ENCODE measurements at regions of chr11 and their contacts with region 1.

Region 1: DNA sequence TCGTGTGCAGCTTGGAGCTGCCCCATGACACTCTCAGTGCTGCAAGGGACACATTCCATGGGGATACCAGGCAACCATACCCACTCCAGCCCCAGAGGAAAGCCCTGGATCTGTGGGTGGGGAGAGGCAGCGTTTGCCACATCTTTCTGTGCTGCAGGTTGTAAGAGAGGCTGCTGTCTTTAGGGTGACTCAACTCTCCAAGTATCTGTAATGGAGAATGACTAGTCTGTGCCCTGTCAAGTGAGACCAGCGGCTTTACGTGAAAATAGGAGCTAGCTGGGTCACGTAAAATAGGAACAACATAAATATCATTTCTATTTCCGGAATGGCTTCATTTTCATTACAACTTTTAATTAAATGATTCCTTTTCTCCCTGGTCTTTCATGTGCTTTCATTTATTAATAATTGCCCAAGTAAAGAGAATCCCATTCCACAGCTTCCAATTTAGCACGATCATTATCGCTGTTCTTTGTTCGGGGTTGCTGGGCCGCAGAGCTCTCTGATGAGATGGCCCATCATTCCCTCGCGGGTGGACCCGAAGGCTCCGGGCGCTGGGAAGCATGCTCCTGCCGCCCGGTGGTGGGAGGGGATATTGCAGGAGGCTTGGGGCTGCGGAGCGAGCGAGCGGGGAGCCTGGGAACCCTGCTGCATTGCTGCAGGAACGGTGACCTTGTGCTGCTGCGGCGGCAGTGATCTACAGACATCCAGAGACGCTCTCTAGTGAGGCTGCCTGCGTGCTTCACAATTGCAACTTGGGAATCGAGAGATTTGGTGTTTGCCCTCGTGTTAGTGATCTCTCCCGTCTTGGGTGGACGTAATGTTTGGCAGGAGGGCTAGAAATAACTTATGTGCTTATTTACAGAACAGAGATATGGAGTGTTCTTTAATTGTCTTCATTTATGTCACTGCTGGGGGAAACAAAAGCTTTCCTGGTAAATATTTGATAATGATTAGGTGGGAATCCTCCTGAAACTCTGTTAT is 10.6 kb downstream of the SLC6A5 start:
- DNase-seq: peak; percentile 68 to 98
- H3K4me3 ChIP-seq: no peak overlapping the region
- H3K27ac ChIP-seq: no peak overlapping the region
- H3K4me1 ChIP-seq: no peaks in the 10 kb centered on the region; a peak in 2 of 7 replicates
- H3K27me3 ChIP-seq: peaks cover 0 to 4% (median 2%) of the 10 kb centered on the region in 4 experiments; a peak in 3 of 7 replicates
- CTCF ChIP-seq: peak; percentile 89 to 97 (median 95)
- EP300 ChIP-seq: no peak
- POLR2A ChIP-seq: no peak
- RAD21 ChIP-seq: peak; percentile 98 to 100

Region 2: DNA sequence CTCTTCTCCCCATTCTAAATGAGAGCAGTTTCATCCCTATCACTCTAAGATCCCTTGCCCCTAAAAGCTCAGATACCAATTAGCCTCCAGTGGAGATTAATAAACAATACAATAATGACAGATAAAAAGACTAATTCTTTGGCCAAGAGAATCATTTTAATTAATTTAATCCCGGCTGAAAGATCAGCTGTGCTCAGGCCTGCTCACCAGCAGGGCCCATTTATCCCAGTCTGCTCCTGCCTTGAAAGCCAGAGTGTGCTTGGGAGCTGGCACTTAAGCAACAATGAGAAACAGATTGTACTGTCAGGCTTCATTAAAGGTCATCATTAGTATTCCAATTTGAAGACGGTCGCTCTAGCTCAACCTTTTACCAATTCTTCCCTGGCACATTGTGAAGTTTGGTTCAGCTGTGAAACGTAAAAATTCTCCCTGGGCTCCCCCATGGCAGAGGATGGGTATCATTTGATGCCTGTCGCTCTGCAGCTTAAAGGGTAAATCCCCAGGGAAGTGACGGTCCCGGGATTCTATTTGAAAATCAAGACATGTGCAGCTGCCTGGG is 282.6 kb before region 1 on chr11:
- CTCF ChIA-PET with region 1: no interaction called
- POLR2A ChIA-PET with region 1: no interaction called
- DNase-seq: no peak
- H3K4me3 ChIP-seq: no peak overlapping the region
- H3K27ac ChIP-seq: no peak overlapping the region
- H3K4me1 ChIP-seq: no peaks in the 10 kb centered on the region
- H3K27me3 ChIP-seq: no peaks in the 10 kb centered on the region
- CTCF ChIP-seq: no peak
- EP300 ChIP-seq: no peak
- POLR2A ChIP-seq: no peak
- RAD21 ChIP-seq: no peak

Region 3: GRCh38 chr11:20387241-20388095 is 222.5 kb before region 1 on chr11 and contains the start of gene PRMT3:
- CTCF ChIA-PET with region 1: interaction called, 10 read pairs
- POLR2A ChIA-PET with region 1: interaction called, 3 read pairs
- DNase-seq: peak; percentile 89 to 98
- H3K4me3 ChIP-seq: peak within 1 kb of the TSS; percentile 63 to 98 (median 88)
- H3K27ac ChIP-seq: peak within 1 kb of the TSS; percentile 96
- H3K4me1 ChIP-seq: peaks cover 0 to 4% (median 3%) of the 10 kb centered on the region in 4 experiments; a peak in 3 of 7 replicates
- H3K27me3 ChIP-seq: no peaks in the 10 kb centered on the region
- CTCF ChIP-seq: peak in 2 of 3 experiments; percentile 75 to 95; a peak in 3 of 4 replicates
- EP300 ChIP-seq: no peak
- POLR2A ChIP-seq: peak; percentile 89 to 90
- RAD21 ChIP-seq: peak; percentile 44 to 48; a peak in 3 of 4 replicates
- total RNA-seq, gene PRMT3: 25.0 and 26.5 TPM in 2 replicates

Region 4: DNA sequence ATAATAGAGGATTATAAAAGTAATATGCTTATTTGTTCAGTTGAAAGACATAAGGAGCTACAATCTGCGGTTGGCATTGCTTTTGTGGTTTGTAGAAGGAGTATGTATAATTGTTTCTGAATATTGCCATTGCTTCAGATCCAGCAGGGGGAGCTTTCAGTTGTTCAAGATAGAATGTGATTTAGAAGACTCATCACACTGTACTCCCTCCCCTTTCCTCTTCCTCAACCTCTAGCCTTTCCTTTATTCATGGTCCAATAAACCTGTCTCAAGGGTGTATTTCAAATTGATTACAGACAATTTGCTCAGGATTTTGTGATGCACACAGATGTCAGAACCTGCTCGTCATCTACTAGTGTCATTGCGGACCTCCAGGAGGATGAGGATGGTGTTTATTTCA is 212.7 kb before region 1 on chr11:
- CTCF ChIA-PET with region 1: interaction called, 53 read pairs
- POLR2A ChIA-PET with region 1: no interaction called
- DNase-seq: no peak
- H3K4me3 ChIP-seq: no peak overlapping the region
- H3K27ac ChIP-seq: no peak overlapping the region
- H3K4me1 ChIP-seq: no peaks in the 10 kb centered on the region
- H3K27me3 ChIP-seq: no peaks in the 10 kb centered on the region
- CTCF ChIP-seq: peak in 2 of 3 experiments; percentile 46 to 56; a peak in 3 of 4 replicates
- EP300 ChIP-seq: no peak
- POLR2A ChIP-seq: no peak
- RAD21 ChIP-seq: peak; percentile 38 to 52

Region 5: GRCh38 chr11:20599221-20600019 is 10.6 kb before region 1 on chr11 and contains the start of gene SLC6A5:
- CTCF ChIA-PET with region 1: interaction called, 22 read pairs
- POLR2A ChIA-PET with region 1: interaction called, 3 read pairs
- DNase-seq: peak; percentile 49 to 88
- H3K4me3 ChIP-seq: peak within 1 kb of the TSS in 2 of 4 experiments; percentile 4 to 58; a peak in 2 of 8 replicates
- H3K27ac ChIP-seq: no peak within 1 kb of the TSS
- H3K4me1 ChIP-seq: peaks cover 0 to 13% (median 2%) of the 10 kb centered on the region in 4 experiments; a peak in 5 of 7 replicates
- H3K27me3 ChIP-seq: peaks cover 58 to 96% (median 89%) of the 10 kb centered on the region in 4 experiments
- CTCF ChIP-seq: no peak
- EP300 ChIP-seq: peak in 1 of 2 experiments; percentile 14; a peak in 1 of 3 replicates
- POLR2A ChIP-seq: no peak
- RAD21 ChIP-seq: peak in 1 of 2 experiments; percentile 35; a peak in 2 of 4 replicates
- total RNA-seq, gene SLC6A5: not detected in 2 replicates

Region 6: DNA sequence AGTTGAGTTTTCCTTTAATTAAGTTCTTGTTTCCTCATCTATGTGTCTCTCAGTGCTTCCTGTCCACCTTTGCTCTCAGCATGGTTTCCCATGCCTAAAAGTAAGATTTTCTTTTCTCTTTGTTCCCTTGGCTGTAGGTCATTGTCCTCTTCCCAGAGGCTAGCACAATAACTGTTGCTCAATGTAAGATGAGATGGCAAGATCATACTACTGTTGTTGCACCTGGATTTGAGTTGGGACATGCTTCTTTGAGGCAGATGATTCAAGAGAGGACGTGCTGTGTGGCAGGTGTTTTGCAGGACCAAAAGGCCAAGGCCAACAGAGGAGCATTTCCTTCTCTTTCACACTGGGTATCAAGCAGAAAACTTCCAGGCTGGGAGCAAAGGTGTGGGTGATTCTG is 48.1 kb after region 1 on chr11:
- CTCF ChIA-PET with region 1: no interaction called
- POLR2A ChIA-PET with region 1: no interaction called
- DNase-seq: no peak
- H3K4me3 ChIP-seq: no peak overlapping the region
- H3K27ac ChIP-seq: no peak overlapping the region
- H3K4me1 ChIP-seq: peaks cover 0 to 7% (median 5%) of the 10 kb centered on the region in 4 experiments; a peak in 5 of 7 replicates
- H3K27me3 ChIP-seq: no peaks in the 10 kb centered on the region
- CTCF ChIP-seq: no peak
- EP300 ChIP-seq: no peak
- POLR2A ChIP-seq: no peak
- RAD21 ChIP-seq: no peak

Measured in H1 (cell line).